ENCODE measurements at regions of chr1 and their contacts with region 1.

Region 1: GRCh38 chr1:152189657-152190442 is 30.8 kb upstream of the RPTN start:
- DNase-seq: peak; percentile 69
- ATAC-seq: peak; percentile 81

Region 2: DNA sequence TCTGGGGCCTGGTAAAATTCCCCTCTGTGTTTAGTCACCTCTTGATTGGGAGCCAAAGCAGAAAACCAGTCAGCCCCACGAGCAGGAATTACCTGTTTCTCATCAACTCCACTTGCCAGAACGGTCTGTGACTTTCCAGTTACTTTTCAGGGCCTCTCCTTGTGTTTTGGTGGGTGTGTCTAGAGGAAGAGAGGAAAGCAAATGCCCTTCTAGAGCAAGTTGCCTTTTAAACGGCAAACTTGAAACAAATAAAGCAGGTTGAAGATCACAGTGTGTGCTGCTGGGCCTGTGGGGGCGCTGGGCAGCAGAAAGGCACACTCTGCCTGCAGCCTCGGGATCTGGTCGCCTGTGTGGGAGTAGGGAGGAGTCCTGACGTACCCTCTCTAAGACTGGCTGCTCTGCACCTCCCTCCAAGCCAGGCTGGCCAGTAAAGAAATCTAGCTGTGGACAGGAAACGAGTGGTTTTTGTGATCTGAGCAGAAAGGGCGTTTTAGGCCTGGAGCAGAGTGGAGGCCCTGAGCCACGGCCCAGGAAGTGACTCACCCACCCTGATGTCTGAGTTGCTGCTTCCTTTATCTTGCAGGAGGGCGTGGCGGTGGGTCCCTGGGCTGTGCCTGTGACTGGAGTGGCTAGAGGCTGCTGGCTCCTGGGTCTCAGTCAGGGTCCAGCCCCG is 142.0 kb before region 1 on chr1:
- intact Hi-C with region 1: loop called (anchors 2 kb)
- DNase-seq: peak; percentile 92
- ATAC-seq: peak; percentile 95

Region 3: DNA sequence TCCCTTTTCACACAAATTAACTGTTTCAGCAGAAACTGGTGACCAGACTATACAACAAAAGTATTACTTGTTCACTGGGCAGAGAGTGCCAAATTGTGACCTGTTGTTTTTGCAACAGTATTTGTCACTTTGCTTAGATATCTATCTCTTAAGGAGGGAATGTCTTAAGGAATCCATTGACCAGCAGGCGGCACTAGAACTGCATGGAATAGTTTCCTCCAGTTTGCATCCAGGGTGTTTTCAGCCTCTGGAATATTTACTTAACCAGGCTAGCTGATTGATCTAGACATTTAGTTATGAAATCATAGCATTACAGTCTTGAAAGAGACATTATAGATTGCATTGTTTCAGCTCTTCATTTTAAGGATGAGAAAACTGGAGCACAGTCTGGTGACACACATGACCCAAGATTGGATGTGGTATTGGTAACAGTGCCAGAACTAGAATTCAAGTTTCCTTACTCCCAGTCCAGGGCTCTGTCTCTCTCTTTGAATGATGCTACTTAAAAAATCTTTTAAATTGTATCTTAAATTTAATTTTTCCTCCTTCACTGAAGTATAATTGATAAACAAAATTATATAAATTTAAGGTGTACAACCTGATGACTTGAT is 47.8 kb before region 1 on chr1:
- intact Hi-C with region 1: loop called (anchors 5 kb)
- DNase-seq: peak; percentile 36
- ATAC-seq: peak; percentile 38

Region 4: DNA sequence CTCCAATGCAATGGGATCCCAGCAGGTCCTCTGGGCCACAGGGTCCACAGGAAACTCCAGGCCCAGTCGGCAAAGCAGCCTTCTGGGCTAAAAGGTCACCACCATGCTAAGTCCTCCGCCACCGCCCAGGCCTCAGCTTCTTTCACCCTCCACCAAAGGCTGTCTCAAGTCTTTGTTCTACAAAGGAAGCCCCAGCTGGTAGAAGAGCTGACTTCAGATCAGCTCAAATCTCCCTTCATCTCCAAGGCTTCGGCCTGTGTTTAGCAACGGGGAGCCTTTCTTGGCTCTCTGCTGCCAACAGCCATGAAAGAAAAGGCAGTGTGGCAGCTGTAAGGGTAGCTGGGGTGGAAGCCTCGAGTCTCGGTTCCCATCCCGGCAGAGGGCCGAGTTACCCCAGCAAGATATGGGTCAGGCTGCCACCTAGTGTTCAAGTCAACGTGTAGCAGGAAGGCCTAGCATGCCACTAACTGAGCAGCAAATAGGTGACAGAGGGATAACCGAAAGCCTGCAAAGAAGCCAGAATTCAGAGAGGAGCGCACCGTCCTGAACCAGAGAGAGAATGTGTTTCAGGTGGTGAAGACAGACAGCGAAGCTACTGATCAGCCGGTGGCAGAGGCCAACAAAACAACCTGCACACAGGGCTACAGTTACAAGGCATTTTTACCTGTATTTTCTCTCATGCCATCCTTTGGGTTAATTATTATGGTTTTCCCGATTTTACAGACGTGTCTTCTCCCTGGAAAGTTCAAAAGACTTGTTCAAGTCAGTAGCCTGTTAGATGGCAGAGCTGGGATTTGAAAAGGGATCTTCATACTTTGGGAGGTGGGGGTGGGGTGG is 251.0 kb after region 1 on chr1:
- intact Hi-C with region 1: loop called (anchors 5 kb)
- DNase-seq: peak; percentile 71
- ATAC-seq: peak; percentile 86

Region 5: GRCh38 chr1:152459596-152460528 is 270.0 kb after region 1 on chr1:
- intact Hi-C with region 1: loop called (anchors 5 kb)
- DNase-seq: peak; percentile 78
- ATAC-seq: peak; percentile 63

Measured in left ventricle myocardium superior (tissue), 1 donor.